CD14-positive monocyte (primary cell): ENCODE measurements at regions of chr2 and their contacts with region 1.

Region 1: GRCh38 chr2:112054847-112055729 is at the start of gene TMEM87B:
- DNase-seq: peak; percentile 93 to 98 (median 97)
- H3K4me3 ChIP-seq: peak within 1 kb of the TSS; percentile 87 to 94 (median 89)
- H3K4me3 Mint-ChIP-seq: peak within 1 kb of the TSS; percentile 94 to 99
- H3K27ac ChIP-seq: peak within 1 kb of the TSS; percentile 89 to 90
- H3K27ac Mint-ChIP-seq: peak within 1 kb of the TSS; percentile 95 to 100 (median 98)
- H3K4me1 ChIP-seq: peaks cover 22 to 35% of the 10 kb centered on the region in 2 donors
- H3K4me1 Mint-ChIP-seq: peaks cover 34% of the 10 kb centered on the region
- H3K27me3 ChIP-seq: no peaks in the 10 kb centered on the region
- H3K27me3 Mint-ChIP-seq: peaks cover 0 to 5% (median 0%) of the 10 kb centered on the region in 3 donors
- CTCF ChIP-seq: no peak
- polyA plus RNA-seq, gene TMEM87B: 9.1 to 13.4 (median 11.4) TPM

Region 2: DNA sequence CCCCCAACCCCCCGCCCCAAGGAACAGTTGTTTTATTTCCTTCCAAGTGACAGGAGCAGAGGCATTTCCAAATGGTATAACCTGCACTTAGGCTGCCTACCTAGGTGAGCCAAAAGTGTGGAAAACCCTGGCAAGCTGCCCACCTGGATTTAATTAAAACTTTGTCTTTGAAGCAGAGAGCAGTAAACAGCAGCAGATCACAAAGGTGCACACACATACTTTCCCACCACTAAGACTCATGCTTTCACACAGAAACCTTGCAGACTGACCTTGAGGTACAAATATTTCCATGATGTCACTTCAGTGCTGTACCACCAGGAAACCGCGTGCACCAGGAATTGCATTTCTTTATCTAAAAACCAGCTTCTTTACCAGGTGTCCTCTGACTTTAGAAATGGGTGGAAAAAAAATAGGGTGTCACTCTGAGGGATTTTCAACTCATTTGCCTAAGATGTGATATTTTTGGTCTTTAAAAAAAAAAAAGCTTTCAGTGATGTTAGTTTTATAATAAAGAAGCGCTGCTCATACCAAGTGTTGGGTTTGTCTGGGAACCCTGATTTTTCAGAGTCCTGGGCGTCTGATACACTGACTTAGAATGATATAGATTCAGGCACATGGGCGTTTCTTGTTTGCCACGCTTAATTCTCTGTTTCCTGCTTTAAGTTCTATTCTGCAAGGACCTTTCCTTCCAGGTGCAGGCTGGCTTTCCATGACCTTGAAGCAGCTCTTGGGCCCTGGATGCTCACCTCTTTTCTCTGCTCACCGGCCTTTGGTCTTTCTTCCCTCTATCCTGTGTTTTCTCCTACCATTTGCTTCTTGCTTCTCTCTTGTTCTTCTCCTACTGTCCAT is 1005.1 kb before region 1 on chr2:
- intact Hi-C with region 1: no loop called
- DNase-seq: no peak
- H3K4me3 ChIP-seq: no peak overlapping the region
- H3K4me3 Mint-ChIP-seq: no peak overlapping the region
- H3K27ac ChIP-seq: no peak overlapping the region
- H3K27ac Mint-ChIP-seq: peak overlapping the region in 2 of 7 donors; percentile 10 to 16
- H3K4me1 ChIP-seq: no peaks in the 10 kb centered on the region
- H3K4me1 Mint-ChIP-seq: peaks cover 5% of the 10 kb centered on the region
- H3K27me3 ChIP-seq: no peaks in the 10 kb centered on the region
- H3K27me3 Mint-ChIP-seq: peaks cover 3 to 6% (median 6%) of the 10 kb centered on the region in 3 donors
- CTCF ChIP-seq: no peak

Region 3: GRCh38 chr2:112006076-112006410 is 49.0 kb before region 1 on chr2:
- intact Hi-C with region 1: loop called in 1 of 2 experiments (anchors 5 kb)
- DNase-seq: peak; percentile 81 to 93 (median 93)
- H3K4me3 ChIP-seq: peak overlapping the region in 1 of 3 experiments; percentile 21
- H3K4me3 Mint-ChIP-seq: peak overlapping the region in 1 of 2 donors; percentile 26
- H3K27ac ChIP-seq: peak overlapping the region; percentile 78 to 79
- H3K27ac Mint-ChIP-seq: peak overlapping the region; percentile 93 to 98 (median 95)
- H3K4me1 ChIP-seq: peaks cover 82 to 92% of the 10 kb centered on the region in 2 donors
- H3K4me1 Mint-ChIP-seq: peaks cover 85% of the 10 kb centered on the region
- H3K27me3 ChIP-seq: no peaks in the 10 kb centered on the region
- H3K27me3 Mint-ChIP-seq: peaks cover 0 to 2% (median 0%) of the 10 kb centered on the region in 3 donors
- CTCF ChIP-seq: no peak

Region 4: DNA sequence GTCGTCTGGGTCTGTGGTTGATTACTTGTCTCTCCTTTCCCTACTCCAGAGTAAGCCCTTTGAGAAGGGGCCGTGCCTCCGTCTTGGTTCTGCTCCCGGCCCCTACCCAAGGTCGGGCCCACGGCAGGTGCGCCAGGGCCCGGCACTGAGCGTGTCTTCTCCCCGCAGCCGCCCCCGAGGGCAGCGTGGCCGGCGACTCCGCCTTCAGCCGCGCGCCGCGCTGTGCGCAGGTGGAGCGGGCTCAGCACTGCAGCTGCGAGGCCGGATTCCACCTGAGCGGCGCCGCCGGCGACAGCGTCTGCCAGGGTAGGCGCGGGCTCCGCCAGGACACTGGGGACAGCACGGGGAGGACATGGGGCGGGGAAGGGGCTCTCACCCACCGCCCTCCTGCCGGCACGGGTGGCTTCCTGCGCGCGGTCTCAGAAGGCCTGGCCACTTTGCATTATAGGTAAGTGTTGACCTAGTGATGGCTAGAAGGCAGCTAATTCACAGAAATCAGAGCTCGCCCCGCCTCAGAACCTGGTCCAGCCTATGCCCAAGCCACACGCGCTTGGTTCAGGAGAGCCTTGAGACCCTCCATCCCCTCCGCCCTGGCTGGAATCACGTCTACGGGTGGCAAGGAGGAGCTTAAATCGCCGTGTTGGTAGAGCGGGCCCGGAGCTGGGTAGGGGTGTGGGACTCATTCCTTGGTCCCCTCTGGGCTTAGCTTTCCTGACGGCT is 126.6 kb after region 1 on chr2:
- intact Hi-C with region 1: no loop called
- DNase-seq: no peak
- H3K4me3 ChIP-seq: no peak overlapping the region
- H3K4me3 Mint-ChIP-seq: peak overlapping the region in 1 of 2 donors; percentile 72
- H3K27ac ChIP-seq: no peak overlapping the region
- H3K27ac Mint-ChIP-seq: no peak overlapping the region
- H3K4me1 ChIP-seq: no peaks in the 10 kb centered on the region
- H3K4me1 Mint-ChIP-seq: peaks cover 3% of the 10 kb centered on the region
- H3K27me3 ChIP-seq: peaks cover 2 to 33% of the 10 kb centered on the region in 2 donors
- H3K27me3 Mint-ChIP-seq: peaks cover 32 to 61% (median 45%) of the 10 kb centered on the region in 3 donors
- CTCF ChIP-seq: no peak

Region 5: GRCh38 chr2:112254466-112255239 is 199.6 kb after region 1 on chr2 and contains the start of gene ZC3H8:
- intact Hi-C with region 1: loop called in 1 of 2 experiments (anchors 10 kb)
- DNase-seq: peak; percentile 88 to 90 (median 90)
- H3K4me3 ChIP-seq: peak within 1 kb of the TSS; percentile 48 to 82 (median 58)
- H3K4me3 Mint-ChIP-seq: peak within 1 kb of the TSS; percentile 84 to 90
- H3K27ac ChIP-seq: peak within 1 kb of the TSS; percentile 85
- H3K27ac Mint-ChIP-seq: peak within 1 kb of the TSS; percentile 91 to 97 (median 96)
- H3K4me1 ChIP-seq: peaks cover 37 to 49% of the 10 kb centered on the region in 2 donors
- H3K4me1 Mint-ChIP-seq: peaks cover 40% of the 10 kb centered on the region
- H3K27me3 ChIP-seq: no peaks in the 10 kb centered on the region
- H3K27me3 Mint-ChIP-seq: peaks cover 0 to 1% (median 0%) of the 10 kb centered on the region in 3 donors
- CTCF ChIP-seq: no peak
- polyA plus RNA-seq, gene ZC3H8: 2.3 to 6.9 (median 2.3) TPM

Region 6: DNA sequence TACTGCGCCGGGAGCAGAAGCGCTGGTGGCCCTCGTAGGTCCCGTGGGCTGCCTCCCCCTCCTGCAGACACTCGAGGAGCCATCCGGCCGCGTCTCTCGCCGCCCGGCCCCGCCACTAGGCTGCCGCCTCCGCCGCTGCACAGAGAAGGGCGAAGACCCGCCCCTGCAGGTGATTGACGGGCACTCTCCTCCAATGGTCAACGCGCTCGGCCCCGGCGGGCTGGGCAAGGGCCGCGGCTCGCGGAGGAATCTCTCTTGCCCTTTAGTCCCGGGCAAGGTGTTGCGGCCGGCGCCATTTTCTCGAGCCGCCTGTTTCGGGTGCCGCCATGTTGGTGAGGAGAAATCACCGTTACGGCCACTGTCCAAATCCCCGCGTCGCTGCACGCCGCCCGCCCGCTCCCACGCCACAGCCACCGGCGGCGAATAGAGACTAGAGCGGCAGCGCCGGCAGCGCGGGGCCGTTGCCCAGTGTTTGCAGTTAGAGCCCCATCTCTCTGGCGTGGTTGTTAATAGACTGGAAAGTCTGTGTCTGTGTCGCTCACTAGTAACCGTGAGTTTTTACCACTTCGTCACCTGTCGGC is 220.3 kb after region 1 on chr2 and contains the start of gene ZC3H6:
- intact Hi-C with region 1: loop called in 1 of 2 experiments (anchors 10 kb)
- DNase-seq: peak; percentile 98 to 99 (median 99)
- H3K4me3 ChIP-seq: peak within 1 kb of the TSS; percentile 81 to 93 (median 83)
- H3K4me3 Mint-ChIP-seq: peak within 1 kb of the TSS; percentile 84 to 90
- H3K27ac ChIP-seq: peak within 1 kb of the TSS; percentile 98 to 99
- H3K27ac Mint-ChIP-seq: peak within 1 kb of the TSS; percentile 95 to 98 (median 97)
- H3K4me1 ChIP-seq: peaks cover 3 to 12% of the 10 kb centered on the region in 2 donors
- H3K4me1 Mint-ChIP-seq: peaks cover 3% of the 10 kb centered on the region
- H3K27me3 ChIP-seq: no peaks in the 10 kb centered on the region
- H3K27me3 Mint-ChIP-seq: no peaks in the 10 kb centered on the region
- CTCF ChIP-seq: no peak
- polyA plus RNA-seq, gene ZC3H6: 2.1 to 2.5 (median 2.4) TPM

Region 7: DNA sequence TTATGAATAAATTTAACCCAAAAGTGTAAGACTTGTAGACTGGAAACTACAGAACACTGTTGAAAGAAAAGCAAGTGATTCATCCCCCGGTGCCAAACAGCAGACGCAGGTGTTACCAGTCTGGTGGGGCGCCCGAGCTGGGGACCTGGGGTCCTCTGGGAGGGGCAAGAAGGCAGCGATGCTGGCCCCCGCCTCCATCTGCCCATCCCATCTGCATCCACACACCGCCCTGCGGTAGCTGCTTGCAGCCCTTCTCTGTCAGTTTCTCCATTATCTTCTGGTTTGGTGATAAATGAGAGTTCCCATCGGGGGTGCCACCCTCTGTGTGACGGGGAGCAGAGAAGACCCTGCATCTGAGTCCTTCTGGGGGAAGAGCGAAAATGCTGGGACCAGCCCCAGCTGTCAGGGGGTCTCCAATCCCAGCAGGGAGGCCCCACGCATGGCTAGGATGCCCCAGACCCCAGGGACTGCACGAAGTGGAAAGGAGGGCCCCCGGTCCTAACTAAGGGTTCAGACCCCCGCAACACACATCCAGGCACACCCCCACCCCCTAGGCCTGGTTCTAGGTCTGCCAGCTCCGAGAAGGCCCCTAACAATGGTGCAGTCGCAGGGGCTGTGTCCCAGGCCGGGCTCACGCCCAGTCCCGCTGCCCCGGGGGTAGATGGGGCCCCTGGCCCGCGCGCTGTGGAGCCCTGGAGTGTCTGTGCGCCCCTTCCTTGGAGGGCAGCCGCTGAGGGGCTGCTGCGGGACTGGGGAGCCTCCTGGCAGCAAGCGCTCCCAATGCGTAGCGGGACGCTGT is 379.0 kb after region 1 on chr2:
- intact Hi-C with region 1: loop called in 1 of 2 experiments (anchors 10 kb)
- DNase-seq: peak in 1 of 3 donors; percentile 2
- H3K4me3 ChIP-seq: no peak overlapping the region
- H3K4me3 Mint-ChIP-seq: no peak overlapping the region
- H3K27ac ChIP-seq: no peak overlapping the region
- H3K27ac Mint-ChIP-seq: no peak overlapping the region
- H3K4me1 ChIP-seq: peaks cover 0 to 5% of the 10 kb centered on the region in 2 donors
- H3K4me1 Mint-ChIP-seq: peaks cover 9% of the 10 kb centered on the region
- H3K27me3 ChIP-seq: no peaks in the 10 kb centered on the region
- H3K27me3 Mint-ChIP-seq: peaks cover under 1 to 3% (median 3%) of the 10 kb centered on the region in 3 donors
- CTCF ChIP-seq: no peak

Region 8: GRCh38 chr2:112584134-112584890 is 529.2 kb after region 1 on chr2 and contains the start of gene CHCHD5:
- intact Hi-C with region 1: loop called in 1 of 2 experiments (anchors 5 kb)
- DNase-seq: peak; percentile 95 to 98 (median 98)
- H3K4me3 ChIP-seq: peak within 1 kb of the TSS; percentile 44 to 80 (median 70)
- H3K4me3 Mint-ChIP-seq: peak within 1 kb of the TSS; percentile 92 to 97
- H3K27ac ChIP-seq: peak within 1 kb of the TSS; percentile 89 to 99
- H3K27ac Mint-ChIP-seq: peak within 1 kb of the TSS; percentile 97 to 100 (median 99)
- H3K4me1 ChIP-seq: peaks cover 24 to 27% of the 10 kb centered on the region in 2 donors
- H3K4me1 Mint-ChIP-seq: peaks cover 44% of the 10 kb centered on the region
- H3K27me3 ChIP-seq: no peaks in the 10 kb centered on the region
- H3K27me3 Mint-ChIP-seq: peaks cover 0 to 3% (median 0%) of the 10 kb centered on the region in 3 donors
- CTCF ChIP-seq: no peak
- polyA plus RNA-seq, gene CHCHD5: 37.1 to 77.3 (median 56.2) TPM